Activated CD8-positive, alpha-beta T cell treated with anti-CD3 and anti-CD28 coated beads for 36 hours (primary cell): ENCODE measurements at regions of chr1 and their contacts with region 1.

Region 1: GRCh38 chr1:56831871-56832693 is 12.9 kb upstream of the FYB2 start:
- DNase-seq: peak; percentile 72
- ATAC-seq: peak; percentile 61
- H3K4me3 Mint-ChIP-seq: no peak overlapping the region
- H3K27ac Mint-ChIP-seq: no peak overlapping the region
- H3K4me1 Mint-ChIP-seq: peaks cover 5% of the 10 kb centered on the region
- H3K27me3 Mint-ChIP-seq: peaks cover 6% of the 10 kb centered on the region
- CTCF ChIP-seq: peak; percentile 93

Region 2: DNA sequence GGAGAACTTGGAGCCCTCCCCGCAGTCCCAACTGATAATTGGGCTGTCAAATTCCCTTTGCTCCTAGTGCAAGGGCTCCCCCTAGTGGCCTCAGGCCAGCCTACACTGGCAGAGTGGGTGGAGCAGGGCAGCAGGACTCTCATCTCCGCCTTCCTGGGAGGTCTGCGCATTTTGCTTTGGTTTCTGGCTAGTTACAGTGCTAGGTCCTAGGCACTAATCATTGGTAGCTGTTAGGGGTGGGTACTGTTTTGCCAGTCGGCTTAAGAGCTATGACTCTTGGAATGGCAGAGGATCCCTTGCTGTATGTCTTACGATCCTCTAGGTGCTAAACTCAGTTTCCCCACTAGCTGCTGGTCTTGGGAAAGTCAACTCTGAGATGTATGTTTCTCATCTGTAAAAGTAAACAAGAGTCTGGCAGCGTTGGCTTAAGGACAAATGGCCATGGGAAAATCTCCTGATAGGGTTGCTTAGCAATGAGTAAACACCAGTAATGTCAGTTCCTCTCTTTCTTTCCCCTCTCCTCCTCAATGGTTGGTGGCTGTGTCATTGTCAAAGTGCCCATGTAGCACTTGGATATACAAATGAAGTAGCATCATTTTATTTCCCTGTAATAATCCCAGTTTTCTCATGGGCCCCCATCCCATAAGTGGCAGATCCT is 10.8 kb before region 1 on chr1:
- CTCF ChIA-PET with region 1: interaction called, 10 read pairs
- POLR2A ChIA-PET with region 1: no interaction called
- intact Hi-C with region 1: no loop called
- DNase-seq: peak; percentile 82
- ATAC-seq: peak; percentile 75
- H3K4me3 Mint-ChIP-seq: no peak overlapping the region
- H3K27ac Mint-ChIP-seq: no peak overlapping the region
- H3K4me1 Mint-ChIP-seq: no peaks in the 10 kb centered on the region
- H3K27me3 Mint-ChIP-seq: peaks cover 6% of the 10 kb centered on the region
- CTCF ChIP-seq: peak; percentile 87

Region 3: GRCh38 chr1:56877973-56878372 is 45.9 kb after region 1 on chr1:
- CTCF ChIA-PET with region 1: no interaction called
- POLR2A ChIA-PET with region 1: no interaction called
- intact Hi-C with region 1: no loop called
- DNase-seq: no peak
- ATAC-seq: no peak
- H3K4me3 Mint-ChIP-seq: no peak overlapping the region
- H3K27ac Mint-ChIP-seq: no peak overlapping the region
- H3K4me1 Mint-ChIP-seq: no peaks in the 10 kb centered on the region
- H3K27me3 Mint-ChIP-seq: peaks cover 6% of the 10 kb centered on the region
- CTCF ChIP-seq: no peak

Region 4: DNA sequence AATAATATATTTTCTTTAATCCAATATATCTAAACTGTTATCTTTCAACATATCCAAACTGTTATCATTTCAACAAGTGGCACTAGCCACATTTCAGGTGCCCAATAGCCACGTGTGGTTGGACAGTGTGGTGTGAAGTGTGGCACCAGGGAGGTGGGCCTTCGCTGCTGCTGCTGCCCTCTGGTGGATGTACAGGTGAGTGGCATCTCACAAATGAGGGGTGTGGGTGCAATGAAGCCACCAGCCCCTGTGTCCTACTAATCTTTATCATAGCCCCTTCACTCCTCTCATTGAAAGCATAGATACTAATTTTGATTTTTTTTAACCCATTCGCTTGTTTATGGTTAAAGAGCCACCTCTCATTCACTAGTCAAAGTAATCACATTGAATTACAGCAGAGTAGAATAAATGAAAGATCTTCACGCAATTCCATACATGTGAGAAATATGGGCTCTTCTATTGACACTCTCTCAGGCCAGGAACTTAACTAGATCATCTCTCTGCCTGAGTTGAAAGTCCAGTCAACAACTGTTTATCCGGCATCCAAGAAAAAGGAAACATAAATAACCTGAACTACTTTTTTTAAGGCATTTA is 1215.3 kb after region 1 on chr1:
- CTCF ChIA-PET with region 1: interaction called, 4 read pairs
- POLR2A ChIA-PET with region 1: no interaction called
- intact Hi-C with region 1: loop called (anchors 10 kb)
- DNase-seq: peak; percentile 45
- ATAC-seq: peak; percentile 53
- H3K4me3 Mint-ChIP-seq: no peak overlapping the region
- H3K27ac Mint-ChIP-seq: no peak overlapping the region
- H3K4me1 Mint-ChIP-seq: no peaks in the 10 kb centered on the region
- H3K27me3 Mint-ChIP-seq: peaks cover 1% of the 10 kb centered on the region
- CTCF ChIP-seq: peak; percentile 72